Activated B cell treated with CpG ODN at 0.5 μM for 24 hours (primary cell): ENCODE measurements at regions of chr17 and their contacts with region 1.

Region 1: DNA sequence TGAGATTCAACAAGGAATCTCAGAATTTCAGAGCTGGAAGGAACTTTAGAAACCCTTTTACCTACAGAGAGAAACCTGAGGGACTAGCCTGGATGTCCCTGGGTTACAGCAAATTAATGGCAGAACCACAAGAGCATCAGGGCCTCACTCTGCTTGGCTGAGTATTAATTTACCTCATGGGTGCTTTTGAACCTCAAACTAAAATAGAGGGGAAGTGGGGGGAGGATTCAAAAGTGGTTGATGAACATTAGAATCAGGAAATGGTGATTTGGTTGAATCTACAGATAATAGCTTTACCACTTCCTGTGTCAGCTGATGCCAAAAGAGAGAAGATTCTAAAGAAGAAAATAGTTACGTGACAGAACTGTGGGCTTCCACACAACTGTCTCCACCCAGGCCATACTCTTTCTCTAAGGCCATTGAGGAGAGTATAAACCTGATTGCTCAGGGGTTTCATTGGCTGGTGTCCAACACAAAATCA is 11.3 kb upstream of the SKAP1 start:
- DNase-seq: no peak
- ATAC-seq: peak; percentile 75
- H3K4me3 Mint-ChIP-seq: peak overlapping the region; percentile 55
- H3K27ac Mint-ChIP-seq: peak overlapping the region; percentile 92
- H3K4me1 Mint-ChIP-seq: peaks cover 88% of the 10 kb centered on the region
- H3K27me3 Mint-ChIP-seq: peaks cover 5% of the 10 kb centered on the region
- CTCF ChIP-seq: no peak

Region 2: GRCh38 chr17:48335858-48336500 is 105.3 kb before region 1 on chr17:
- CTCF ChIA-PET with region 1: no interaction called
- POLR2A ChIA-PET with region 1: no interaction called
- intact Hi-C with region 1: no loop called
- DNase-seq: no peak
- ATAC-seq: peak; percentile 47
- H3K4me3 Mint-ChIP-seq: no peak overlapping the region
- H3K27ac Mint-ChIP-seq: no peak overlapping the region
- H3K4me1 Mint-ChIP-seq: no peaks in the 10 kb centered on the region
- H3K27me3 Mint-ChIP-seq: no peaks in the 10 kb centered on the region
- CTCF ChIP-seq: peak; percentile 60

Region 3: DNA sequence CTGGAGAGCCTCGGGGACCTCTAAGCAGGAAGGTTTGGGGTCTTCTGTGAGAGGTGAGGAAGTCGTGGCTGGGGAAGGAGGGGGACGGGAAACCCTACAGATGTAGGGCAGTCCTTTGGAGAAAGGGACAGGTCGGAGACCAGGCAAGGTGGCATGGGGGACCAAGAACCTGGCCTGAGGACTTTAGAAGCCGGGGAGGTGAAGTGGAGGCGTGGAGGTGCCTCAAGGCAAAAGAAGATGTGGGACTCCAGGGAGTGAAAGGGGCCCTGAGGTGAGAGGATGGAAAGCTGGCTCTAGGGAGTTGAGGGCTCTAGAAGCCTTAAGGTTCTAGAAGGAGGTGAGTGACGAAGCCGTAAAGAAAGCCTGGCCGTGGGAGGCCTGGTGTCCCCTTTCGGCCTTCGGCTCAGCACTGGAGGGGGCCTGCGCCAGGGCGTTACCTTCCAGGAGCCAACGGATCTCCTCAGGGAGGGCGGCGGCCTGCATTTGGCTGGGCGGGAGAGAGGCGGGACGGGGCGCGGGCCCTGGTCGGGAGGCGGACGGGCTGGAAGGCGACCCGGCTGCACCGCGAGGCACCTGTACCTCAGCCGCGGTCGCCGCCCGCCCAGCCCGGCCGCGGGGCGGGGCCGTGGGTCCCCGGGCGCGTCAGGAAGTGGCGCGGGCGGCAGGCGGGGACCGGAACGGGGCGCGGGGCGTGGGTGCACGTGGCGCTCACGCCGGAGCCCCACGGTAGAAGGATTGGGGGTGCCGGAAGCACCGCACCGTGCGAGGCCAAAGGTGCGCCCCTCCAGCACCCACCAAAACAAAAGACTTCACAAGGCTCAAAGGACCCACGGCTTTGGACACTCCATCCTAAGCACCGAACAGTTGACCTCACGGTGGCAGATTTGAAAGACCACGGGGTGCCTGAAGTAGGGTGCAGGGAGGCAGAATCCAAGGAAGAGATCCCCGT is 11.4 kb before region 1 on chr17 and contains the start of gene SKAP1:
- CTCF ChIA-PET with region 1: no interaction called
- POLR2A ChIA-PET with region 1: interaction called, 14 read pairs
- intact Hi-C with region 1: loop called (anchors 1 kb)
- DNase-seq: peak; percentile 61
- ATAC-seq: peak; percentile 90
- H3K4me3 Mint-ChIP-seq: peak within 1 kb of the TSS; percentile 86
- H3K27ac Mint-ChIP-seq: peak within 1 kb of the TSS; percentile 83
- H3K4me1 Mint-ChIP-seq: peaks cover 67% of the 10 kb centered on the region
- H3K27me3 Mint-ChIP-seq: peaks cover 8% of the 10 kb centered on the region
- CTCF ChIP-seq: no peak
- total RNA-seq, gene SKAP1: 24.3 and 25.3 TPM in 2 replicates